ENCODE measurements at regions of chr3 and their contacts with region 1.

Region 1: DNA sequence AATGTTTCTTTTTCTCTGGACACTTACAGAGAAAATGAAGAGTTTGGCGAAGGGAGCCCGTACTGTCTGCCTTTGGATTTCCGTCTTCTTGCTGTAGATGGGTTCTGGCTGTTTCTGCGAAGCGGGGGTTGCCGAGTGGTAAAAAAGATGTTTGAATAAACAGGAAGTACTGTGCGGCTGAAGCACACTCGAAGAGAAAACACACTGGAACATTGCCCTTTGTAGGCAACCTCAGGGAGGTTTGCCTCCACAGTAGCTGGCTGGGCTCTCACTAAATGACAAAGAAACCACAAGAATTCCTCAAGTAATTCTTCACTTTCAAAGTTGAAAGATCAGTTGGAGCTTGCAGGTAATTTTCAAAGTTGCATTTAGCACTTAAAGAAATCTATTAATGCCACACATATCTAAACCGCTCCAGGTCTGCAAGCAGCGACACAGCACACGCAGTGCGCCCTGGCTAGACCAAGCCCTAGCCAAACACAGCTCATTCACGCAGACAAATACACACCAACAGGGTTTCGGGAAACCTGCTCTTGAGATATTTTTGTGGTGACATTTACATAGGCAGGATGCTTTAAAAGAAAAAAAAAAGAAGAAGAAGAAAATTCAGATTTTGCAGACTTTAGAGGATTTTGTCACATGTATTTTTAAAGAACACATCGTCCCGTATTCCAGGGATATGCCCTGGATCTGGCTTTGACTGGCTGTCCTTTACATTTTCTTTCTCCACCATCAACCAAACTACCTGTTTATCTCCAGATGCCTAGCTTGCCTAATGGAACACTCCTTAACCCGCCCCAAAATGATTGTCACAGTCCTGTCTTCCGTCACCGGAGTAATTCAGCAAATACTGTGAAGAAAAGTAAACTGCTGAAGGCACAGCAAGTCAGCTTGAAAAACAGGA is 452.8 kb downstream of the FOXP1 start:
- DNase-seq: no peak
- ATAC-seq: peak; percentile 69
- H3K4me3 Mint-ChIP-seq: peak overlapping the region; percentile 88
- H3K27ac Mint-ChIP-seq: peak overlapping the region; percentile 93
- H3K4me1 Mint-ChIP-seq: peaks cover 79% of the 10 kb centered on the region
- H3K27me3 Mint-ChIP-seq: no peaks in the 10 kb centered on the region
- CTCF ChIP-seq: no peak

Region 2: DNA sequence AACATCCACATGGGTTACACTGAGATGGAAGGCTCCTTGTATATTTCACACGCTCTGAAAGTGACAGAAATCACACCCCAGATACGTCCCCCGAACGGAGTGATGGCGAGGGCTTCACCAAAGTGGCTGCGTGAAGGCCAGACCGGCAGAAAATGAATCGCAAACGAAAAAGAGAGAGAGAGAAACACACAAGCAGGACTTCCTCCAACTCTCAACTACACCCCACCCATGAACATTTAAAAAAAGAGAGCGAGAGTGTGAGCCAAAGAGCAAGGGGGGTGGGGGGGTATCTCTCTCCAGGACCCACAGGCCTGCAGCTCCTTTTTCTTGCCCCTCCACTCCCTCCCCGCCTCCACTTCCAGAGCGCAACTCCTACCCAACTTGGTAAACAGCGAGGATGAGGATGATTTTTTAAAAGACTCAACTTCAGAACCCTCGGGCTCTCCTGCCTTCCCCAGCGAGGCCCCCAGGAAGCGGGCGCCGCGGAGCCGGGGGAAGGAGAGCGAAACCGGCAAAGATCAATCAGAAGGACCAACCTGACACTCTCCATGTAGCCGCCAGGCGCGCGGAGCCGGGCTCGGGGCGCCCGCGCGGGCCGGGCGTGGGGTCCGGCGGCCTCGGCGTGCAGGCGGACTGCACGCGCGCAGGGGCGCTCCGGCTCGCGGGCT is 66.3 kb before region 1 on chr3:
- CTCF ChIA-PET with region 1: no interaction called
- POLR2A ChIA-PET with region 1: interaction called, 147 read pairs
- intact Hi-C with region 1: loop called (anchors 1 kb)
- DNase-seq: peak; percentile 64
- ATAC-seq: peak; percentile 33
- H3K4me3 Mint-ChIP-seq: no peak overlapping the region
- H3K27ac Mint-ChIP-seq: no peak overlapping the region
- H3K4me1 Mint-ChIP-seq: peaks cover 67% of the 10 kb centered on the region
- H3K27me3 Mint-ChIP-seq: no peaks in the 10 kb centered on the region
- CTCF ChIP-seq: no peak

Region 3: DNA sequence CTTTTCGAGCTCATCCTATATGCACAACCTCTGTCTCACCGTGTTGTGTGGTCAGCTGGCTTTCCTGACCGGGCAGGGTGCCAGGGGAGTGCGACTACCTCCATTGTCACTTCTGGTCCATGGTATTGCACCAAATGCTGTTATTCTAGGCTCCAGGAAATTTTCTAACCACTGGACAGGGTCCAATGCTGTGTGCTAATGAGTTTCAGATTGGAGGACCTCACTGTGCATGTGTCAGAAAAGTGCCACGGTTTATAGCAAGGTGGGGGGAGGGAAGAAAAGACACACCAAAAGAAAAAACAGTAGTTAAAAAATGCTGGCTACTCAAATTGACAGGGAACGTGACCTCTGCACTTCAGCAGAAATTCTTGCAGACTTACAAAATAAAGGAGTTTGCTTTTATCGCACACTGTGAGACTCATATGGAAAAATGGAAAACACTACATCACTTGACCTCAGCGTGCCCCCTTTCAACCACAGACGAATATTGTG is 27.2 kb before region 1 on chr3:
- CTCF ChIA-PET with region 1: no interaction called
- POLR2A ChIA-PET with region 1: interaction called, 33 read pairs
- intact Hi-C with region 1: no loop called
- DNase-seq: no peak
- ATAC-seq: no peak
- H3K4me3 Mint-ChIP-seq: no peak overlapping the region
- H3K27ac Mint-ChIP-seq: peak overlapping the region; percentile 71
- H3K4me1 Mint-ChIP-seq: peaks cover 94% of the 10 kb centered on the region
- H3K27me3 Mint-ChIP-seq: no peaks in the 10 kb centered on the region
- CTCF ChIP-seq: no peak

Region 4: DNA sequence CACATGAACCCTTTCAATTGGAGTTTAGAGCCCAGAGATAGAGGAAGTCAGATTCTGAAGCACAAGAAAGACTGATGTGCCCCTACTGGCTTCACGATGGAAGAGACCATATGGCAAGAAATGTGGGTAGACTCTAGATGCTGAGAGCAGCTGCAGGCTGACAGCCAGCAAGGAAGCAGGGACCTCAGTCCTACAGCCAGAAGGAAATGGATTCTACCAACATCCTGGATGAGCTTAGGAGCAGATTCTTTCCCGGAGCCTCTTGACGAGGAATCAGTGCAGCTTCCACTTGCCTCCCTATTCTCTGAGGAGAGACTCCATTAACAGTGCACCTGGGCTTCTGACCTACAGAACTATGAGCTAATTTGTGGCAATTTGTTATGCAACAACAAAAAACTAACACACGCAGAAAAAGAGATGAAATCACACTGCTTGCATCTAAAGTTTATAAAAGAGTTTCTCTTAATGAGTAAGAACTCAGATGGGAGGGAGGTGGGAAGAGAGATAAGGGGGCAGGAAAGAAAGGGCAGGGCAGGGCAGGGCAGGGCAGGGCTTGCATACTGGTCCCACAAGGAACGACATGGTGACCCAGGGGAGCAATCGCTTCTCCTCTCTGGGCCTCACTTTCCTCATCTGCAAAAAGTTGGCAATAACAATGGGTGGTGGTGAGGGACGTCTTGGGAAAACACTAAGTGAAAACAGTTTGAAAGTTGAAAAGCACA is 11.9 kb after region 1 on chr3:
- CTCF ChIA-PET with region 1: interaction called, 4 read pairs
- POLR2A ChIA-PET with region 1: interaction called, 49 read pairs
- intact Hi-C with region 1: loop called (anchors 1 kb)
- DNase-seq: no peak
- ATAC-seq: peak; percentile 72
- H3K4me3 Mint-ChIP-seq: no peak overlapping the region
- H3K27ac Mint-ChIP-seq: peak overlapping the region; percentile 74
- H3K4me1 Mint-ChIP-seq: peaks cover 39% of the 10 kb centered on the region
- H3K27me3 Mint-ChIP-seq: no peaks in the 10 kb centered on the region
- CTCF ChIP-seq: no peak

Region 5: DNA sequence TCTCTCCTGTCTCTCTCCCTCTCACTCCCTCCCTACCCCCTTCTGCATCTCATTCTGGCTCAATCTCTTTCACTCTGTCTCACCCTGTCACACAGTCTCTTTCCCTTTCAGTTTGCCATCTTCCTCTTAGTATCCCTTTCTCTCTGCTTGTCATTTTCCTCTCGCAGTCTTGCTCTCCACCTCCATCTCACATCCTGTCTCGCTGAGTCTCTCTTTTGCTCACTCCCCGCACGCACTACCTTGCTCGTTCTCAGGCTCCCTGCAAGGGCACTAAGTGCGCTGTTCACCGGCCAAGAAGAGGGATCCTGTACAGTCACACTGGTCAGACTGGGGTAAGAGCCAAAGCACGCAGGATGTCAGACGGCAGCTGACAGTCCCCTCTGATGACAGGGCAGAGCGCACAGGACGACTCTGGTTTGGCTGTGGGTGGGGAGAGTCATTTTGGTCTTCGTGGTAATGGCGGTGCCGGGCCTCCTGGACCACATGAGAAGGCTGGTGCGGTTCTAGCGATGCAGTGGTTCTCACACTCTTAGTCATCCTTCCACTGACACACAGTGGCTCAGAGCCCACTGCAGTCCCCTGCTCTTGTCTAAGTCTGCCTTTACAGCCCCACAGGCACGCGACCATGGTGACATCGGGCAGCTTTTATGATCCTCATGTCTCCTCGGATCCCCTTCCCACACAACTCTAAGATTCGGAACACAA is 96.0 kb after region 1 on chr3:
- CTCF ChIA-PET with region 1: interaction called, 3 read pairs
- POLR2A ChIA-PET with region 1: interaction called, 44 read pairs
- intact Hi-C with region 1: loop called (anchors 1 kb)
- DNase-seq: peak; percentile 50
- ATAC-seq: peak; percentile 76
- H3K4me3 Mint-ChIP-seq: peak overlapping the region; percentile 89
- H3K27ac Mint-ChIP-seq: peak overlapping the region; percentile 97
- H3K4me1 Mint-ChIP-seq: peaks cover 76% of the 10 kb centered on the region
- H3K27me3 Mint-ChIP-seq: no peaks in the 10 kb centered on the region
- CTCF ChIP-seq: no peak

Region 6: GRCh38 chr3:71376911-71377310 is 246.2 kb after region 1 on chr3:
- CTCF ChIA-PET with region 1: no interaction called
- POLR2A ChIA-PET with region 1: no interaction called
- intact Hi-C with region 1: no loop called
- DNase-seq: no peak
- ATAC-seq: peak; percentile 87
- H3K4me3 Mint-ChIP-seq: peak overlapping the region; percentile 15
- H3K27ac Mint-ChIP-seq: peak overlapping the region; percentile 88
- H3K4me1 Mint-ChIP-seq: peaks cover 80% of the 10 kb centered on the region
- H3K27me3 Mint-ChIP-seq: no peaks in the 10 kb centered on the region
- CTCF ChIP-seq: no peak

Region 7: GRCh38 chr3:71389911-71390573 is 259.3 kb after region 1 on chr3:
- CTCF ChIA-PET with region 1: no interaction called
- POLR2A ChIA-PET with region 1: interaction called, 29 read pairs
- intact Hi-C with region 1: loop called (anchors 2 kb)
- DNase-seq: no peak
- ATAC-seq: peak; percentile 6
- H3K4me3 Mint-ChIP-seq: peak overlapping the region; percentile 73
- H3K27ac Mint-ChIP-seq: peak overlapping the region; percentile 99
- H3K4me1 Mint-ChIP-seq: peaks cover 86% of the 10 kb centered on the region
- H3K27me3 Mint-ChIP-seq: no peaks in the 10 kb centered on the region
- CTCF ChIP-seq: no peak

Region 8: GRCh38 chr3:71846185-71846584 is 715.5 kb after region 1 on chr3:
- CTCF ChIA-PET with region 1: no interaction called
- POLR2A ChIA-PET with region 1: no interaction called
- intact Hi-C with region 1: no loop called
- DNase-seq: no peak
- ATAC-seq: no peak
- H3K4me3 Mint-ChIP-seq: no peak overlapping the region
- H3K27ac Mint-ChIP-seq: no peak overlapping the region
- H3K4me1 Mint-ChIP-seq: no peaks in the 10 kb centered on the region
- H3K27me3 Mint-ChIP-seq: peaks cover 4% of the 10 kb centered on the region
- CTCF ChIP-seq: no peak

Measured in activated B cell treated with CpG ODN at 0.5 μM for 24 hours (primary cell).